ENCODE measurements at regions of chr1 and their contacts with region 1.

Region 1: DNA sequence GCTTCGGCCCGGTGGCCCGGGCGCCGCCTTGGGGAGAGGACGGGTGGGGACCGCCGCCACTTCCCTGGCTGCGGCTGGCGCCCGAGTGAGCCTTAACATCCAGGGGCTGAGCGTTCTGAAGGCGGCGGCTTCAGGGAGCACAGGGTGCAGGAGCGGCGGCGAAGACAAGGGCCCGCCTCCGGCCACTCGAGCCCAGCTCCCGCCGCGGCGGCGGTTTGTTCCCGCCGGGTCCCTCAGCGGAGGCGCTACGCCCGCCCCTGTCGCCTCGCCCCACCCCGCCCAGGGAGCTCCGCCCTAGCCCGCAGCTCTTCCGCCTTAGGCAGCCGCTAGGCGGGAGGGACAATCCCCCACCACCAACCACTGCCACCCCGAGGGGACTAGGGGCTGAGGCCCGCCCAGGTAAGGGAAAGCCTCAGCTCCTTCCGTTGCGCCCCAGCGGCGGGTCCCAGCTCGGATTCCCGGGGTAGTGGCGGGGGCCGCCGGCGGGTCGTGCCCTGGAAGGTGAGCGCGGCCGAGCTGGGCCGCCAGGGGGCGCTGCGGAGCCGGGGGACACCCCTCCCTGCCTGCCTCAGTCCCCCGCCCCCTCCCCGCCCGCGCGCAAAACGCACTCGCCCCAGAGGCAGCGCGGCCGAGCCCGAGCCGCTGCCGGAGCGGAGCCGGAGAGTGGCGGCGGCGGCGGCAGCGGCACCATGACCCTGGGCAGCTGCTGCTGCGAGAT is at the start of gene FOXD2:
- DNase-seq: peak; percentile 85 to 99 (median 92)
- ATAC-seq: peak; percentile 92
- H3K4me3 ChIP-seq: peak within 1 kb of the TSS; percentile 76
- H3K4me3 Mint-ChIP-seq: peak within 1 kb of the TSS; percentile 84 to 95 (median 89)
- H3K27ac ChIP-seq: peak within 1 kb of the TSS; percentile 66
- H3K27ac Mint-ChIP-seq: peak within 1 kb of the TSS in 8 of 9 donors; percentile 46 to 86 (median 70)
- H3K4me1 ChIP-seq: peaks cover 8 to 33% of the 10 kb centered on the region in 2 donors
- H3K4me1 Mint-ChIP-seq: peaks cover 14 to 37% (median 27%) of the 10 kb centered on the region in 7 donors
- H3K27me3 ChIP-seq: peaks cover 0 to 20% of the 10 kb centered on the region in 2 donors
- H3K27me3 Mint-ChIP-seq: peaks cover 14 to 39% (median 19%) of the 10 kb centered on the region in 5 donors
- total RNA-seq, gene FOXD2: 0.16 to 0.59 (median 0.24) TPM

Region 2: DNA sequence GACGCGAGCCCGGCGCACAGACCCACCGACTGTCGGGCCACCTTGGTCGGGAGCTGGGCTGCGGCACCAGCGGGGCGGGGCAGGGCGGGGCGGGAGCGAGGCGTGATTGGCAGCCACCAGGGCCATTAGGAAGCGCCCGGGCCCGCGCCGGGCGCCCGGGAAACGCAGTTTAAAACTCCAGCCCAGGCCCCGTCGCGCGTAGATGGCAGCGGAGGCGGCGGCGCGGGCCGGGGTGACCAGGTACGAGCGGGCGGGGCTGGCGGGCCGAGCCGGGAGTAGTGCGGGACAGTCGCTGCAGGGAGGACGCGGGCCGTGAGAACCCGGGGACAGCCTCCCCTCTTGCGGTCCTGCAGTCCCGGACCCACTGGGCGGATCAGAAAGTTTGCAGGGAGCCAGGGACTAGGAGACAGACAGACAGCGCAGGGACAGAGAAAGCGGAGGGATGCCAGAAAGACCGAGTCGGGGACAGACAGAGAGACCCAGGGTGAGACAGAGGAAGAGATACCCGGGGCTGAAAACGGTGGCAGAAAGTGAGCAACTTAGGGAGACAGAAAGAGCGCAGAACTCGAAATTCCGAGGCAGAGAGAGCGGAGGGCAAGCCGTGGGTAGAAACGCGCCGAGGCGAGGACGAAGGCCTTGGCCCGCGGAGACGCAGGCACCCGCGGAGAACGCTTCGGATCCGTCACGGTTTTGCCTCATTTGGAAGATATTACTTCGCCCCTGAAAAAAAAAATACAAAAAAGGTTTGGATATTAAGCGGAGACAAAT is 947.8 kb before region 1 on chr1 and contains the start of gene DMBX1:
- CTCF ChIA-PET with region 1: no interaction called
- POLR2A ChIA-PET with region 1: no interaction called
- intact Hi-C with region 1: loop called in 1 of 2 experiments (anchors 10 kb)
- DNase-seq: peak in 1 of 9 donors; percentile 57
- ATAC-seq: peak; percentile 49
- H3K4me3 ChIP-seq: no peak within 1 kb of the TSS
- H3K4me3 Mint-ChIP-seq: peak within 1 kb of the TSS; percentile 72 to 90 (median 81)
- H3K27ac ChIP-seq: no peak within 1 kb of the TSS
- H3K27ac Mint-ChIP-seq: peak within 1 kb of the TSS in 2 of 9 donors; percentile 59 to 60
- H3K4me1 ChIP-seq: no peaks in the 10 kb centered on the region
- H3K4me1 Mint-ChIP-seq: peaks cover 0 to 27% (median 20%) of the 10 kb centered on the region in 7 donors
- H3K27me3 ChIP-seq: peaks cover 6 to 18% of the 10 kb centered on the region in 2 donors
- H3K27me3 Mint-ChIP-seq: peaks cover 67 to 93% (median 80%) of the 10 kb centered on the region in 5 donors
- total RNA-seq, gene DMBX1: not detected

Region 3: GRCh38 chr1:47231301-47232186 is 206.1 kb before region 1 on chr1:
- CTCF ChIA-PET with region 1: no interaction called
- POLR2A ChIA-PET with region 1: no interaction called
- intact Hi-C with region 1: loop called in 1 of 2 experiments (anchors 2 kb)
- DNase-seq: peak in 4 of 9 donors; percentile 14 to 33 (median 18)
- ATAC-seq: peak; percentile 55
- H3K4me3 ChIP-seq: peak overlapping the region; percentile 4
- H3K4me3 Mint-ChIP-seq: peak overlapping the region; percentile 74 to 94 (median 84)
- H3K27ac ChIP-seq: no peak overlapping the region
- H3K27ac Mint-ChIP-seq: peak overlapping the region in 1 of 9 donors; percentile 62
- H3K4me1 ChIP-seq: peaks cover 12 to 13% of the 10 kb centered on the region in 2 donors
- H3K4me1 Mint-ChIP-seq: peaks cover 8 to 37% (median 28%) of the 10 kb centered on the region in 7 donors
- H3K27me3 ChIP-seq: peaks cover 23 to 45% of the 10 kb centered on the region in 2 donors
- H3K27me3 Mint-ChIP-seq: peaks cover 70 to 95% (median 90%) of the 10 kb centered on the region in 5 donors

Region 4: GRCh38 chr1:47313915-47314664 is 123.5 kb before region 1 on chr1 and contains the start of gene STIL:
- CTCF ChIA-PET with region 1: interaction called, 5 read pairs
- POLR2A ChIA-PET with region 1: no interaction called
- intact Hi-C with region 1: loop called (anchors 1 kb)
- DNase-seq: peak; percentile 87 to 96 (median 95)
- ATAC-seq: peak; percentile 98
- H3K4me3 ChIP-seq: peak within 1 kb of the TSS; percentile 73
- H3K4me3 Mint-ChIP-seq: peak within 1 kb of the TSS; percentile 84 to 98 (median 93)
- H3K27ac ChIP-seq: peak within 1 kb of the TSS; percentile 78
- H3K27ac Mint-ChIP-seq: peak within 1 kb of the TSS; percentile 88 to 98 (median 95)
- H3K4me1 ChIP-seq: no peaks in the 10 kb centered on the region
- H3K4me1 Mint-ChIP-seq: peaks cover 4 to 26% (median 13%) of the 10 kb centered on the region in 7 donors
- H3K27me3 ChIP-seq: no peaks in the 10 kb centered on the region
- H3K27me3 Mint-ChIP-seq: peaks cover 0 to 3% (median 0%) of the 10 kb centered on the region in 5 donors
- total RNA-seq, gene STIL: 1.3 to 28.5 (median 1.9) TPM

Region 5: GRCh38 chr1:47333922-47334764 is 103.5 kb before region 1 on chr1:
- CTCF ChIA-PET with region 1: no interaction called
- POLR2A ChIA-PET with region 1: interaction called, 5 read pairs
- intact Hi-C with region 1: loop called (anchors 1 kb)
- DNase-seq: peak; percentile 63 to 82 (median 77)
- ATAC-seq: peak; percentile 93
- H3K4me3 ChIP-seq: peak overlapping the region; percentile 87
- H3K4me3 Mint-ChIP-seq: peak overlapping the region in 6 of 10 donors; percentile 90 to 94 (median 92)
- H3K27ac ChIP-seq: peak overlapping the region; percentile 92
- H3K27ac Mint-ChIP-seq: peak overlapping the region in 6 of 9 donors; percentile 76 to 94 (median 92)
- H3K4me1 ChIP-seq: peaks cover 6 to 16% of the 10 kb centered on the region in 2 donors
- H3K4me1 Mint-ChIP-seq: peaks cover 12 to 34% (median 22%) of the 10 kb centered on the region in 7 donors
- H3K27me3 ChIP-seq: no peaks in the 10 kb centered on the region
- H3K27me3 Mint-ChIP-seq: no peaks in the 10 kb centered on the region

Region 6: DNA sequence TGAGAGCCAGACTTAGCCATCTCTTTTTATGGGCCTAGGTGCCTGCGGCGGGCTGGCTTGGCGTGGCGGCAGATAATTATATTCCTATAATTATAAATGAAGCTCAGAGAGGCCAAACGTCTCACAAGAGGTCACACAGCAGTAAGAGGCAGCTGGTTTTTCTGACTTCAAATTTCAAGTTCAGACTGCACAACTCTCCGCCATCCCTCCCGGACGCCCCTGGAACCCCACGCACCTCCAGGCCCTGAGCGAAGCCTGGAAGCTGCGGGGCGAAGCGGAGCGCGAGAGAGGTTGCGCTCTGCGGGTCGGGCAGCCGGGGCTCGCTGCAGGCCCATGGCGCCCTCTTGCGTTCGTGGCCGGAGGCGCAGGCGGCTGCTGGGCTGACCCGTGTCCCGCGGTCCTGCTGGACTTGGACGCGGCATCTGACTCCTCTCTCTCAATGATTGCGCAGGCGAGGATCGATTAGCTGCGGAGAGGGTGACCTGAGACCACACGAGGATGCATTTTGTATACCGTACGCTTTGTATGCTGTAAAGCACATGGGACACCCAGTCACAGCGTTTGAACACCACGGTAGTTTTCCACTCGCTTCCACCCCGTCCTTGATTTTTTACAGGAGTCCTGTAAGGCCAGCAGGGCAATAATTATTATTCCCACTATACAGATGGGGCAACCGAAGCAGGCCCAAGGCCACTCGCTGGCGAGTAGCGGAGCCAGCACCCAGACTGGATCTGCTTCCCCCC is 272.9 kb after region 1 on chr1:
- CTCF ChIA-PET with region 1: interaction called, 11 read pairs
- POLR2A ChIA-PET with region 1: no interaction called
- intact Hi-C with region 1: loop called (anchors 1 kb)
- DNase-seq: peak; percentile 20 to 83 (median 57)
- ATAC-seq: peak; percentile 83
- H3K4me3 ChIP-seq: peak overlapping the region; percentile 20
- H3K4me3 Mint-ChIP-seq: peak overlapping the region in 7 of 10 donors; percentile 3 to 75 (median 57)
- H3K27ac ChIP-seq: no peak overlapping the region
- H3K27ac Mint-ChIP-seq: no peak overlapping the region
- H3K4me1 ChIP-seq: peaks cover 8 to 10% of the 10 kb centered on the region in 2 donors
- H3K4me1 Mint-ChIP-seq: peaks cover 0 to 12% (median 5%) of the 10 kb centered on the region in 7 donors
- H3K27me3 ChIP-seq: peaks cover 5 to 20% of the 10 kb centered on the region in 2 donors
- H3K27me3 Mint-ChIP-seq: peaks cover 54 to 82% (median 68%) of the 10 kb centered on the region in 5 donors

Region 7: GRCh38 chr1:47725992-47726855 is 288.6 kb after region 1 on chr1:
- CTCF ChIA-PET with region 1: interaction called, 16 read pairs
- POLR2A ChIA-PET with region 1: interaction called, 3 read pairs
- intact Hi-C with region 1: loop called (anchors 1 to 2 kb)
- DNase-seq: peak; percentile 9 to 56 (median 42)
- ATAC-seq: peak; percentile 79
- H3K4me3 ChIP-seq: no peak overlapping the region
- H3K4me3 Mint-ChIP-seq: peak overlapping the region; percentile 6 to 83 (median 64)
- H3K27ac ChIP-seq: no peak overlapping the region
- H3K27ac Mint-ChIP-seq: no peak overlapping the region
- H3K4me1 ChIP-seq: no peaks in the 10 kb centered on the region
- H3K4me1 Mint-ChIP-seq: peaks cover 0 to 11% (median 5%) of the 10 kb centered on the region in 7 donors
- H3K27me3 ChIP-seq: peaks cover 3 to 5% of the 10 kb centered on the region in 2 donors
- H3K27me3 Mint-ChIP-seq: peaks cover 36 to 66% (median 45%) of the 10 kb centered on the region in 5 donors